HepG2 (cell line): ENCODE measurements at regions of chr3 and their contacts with region 1.

Region 1: DNA sequence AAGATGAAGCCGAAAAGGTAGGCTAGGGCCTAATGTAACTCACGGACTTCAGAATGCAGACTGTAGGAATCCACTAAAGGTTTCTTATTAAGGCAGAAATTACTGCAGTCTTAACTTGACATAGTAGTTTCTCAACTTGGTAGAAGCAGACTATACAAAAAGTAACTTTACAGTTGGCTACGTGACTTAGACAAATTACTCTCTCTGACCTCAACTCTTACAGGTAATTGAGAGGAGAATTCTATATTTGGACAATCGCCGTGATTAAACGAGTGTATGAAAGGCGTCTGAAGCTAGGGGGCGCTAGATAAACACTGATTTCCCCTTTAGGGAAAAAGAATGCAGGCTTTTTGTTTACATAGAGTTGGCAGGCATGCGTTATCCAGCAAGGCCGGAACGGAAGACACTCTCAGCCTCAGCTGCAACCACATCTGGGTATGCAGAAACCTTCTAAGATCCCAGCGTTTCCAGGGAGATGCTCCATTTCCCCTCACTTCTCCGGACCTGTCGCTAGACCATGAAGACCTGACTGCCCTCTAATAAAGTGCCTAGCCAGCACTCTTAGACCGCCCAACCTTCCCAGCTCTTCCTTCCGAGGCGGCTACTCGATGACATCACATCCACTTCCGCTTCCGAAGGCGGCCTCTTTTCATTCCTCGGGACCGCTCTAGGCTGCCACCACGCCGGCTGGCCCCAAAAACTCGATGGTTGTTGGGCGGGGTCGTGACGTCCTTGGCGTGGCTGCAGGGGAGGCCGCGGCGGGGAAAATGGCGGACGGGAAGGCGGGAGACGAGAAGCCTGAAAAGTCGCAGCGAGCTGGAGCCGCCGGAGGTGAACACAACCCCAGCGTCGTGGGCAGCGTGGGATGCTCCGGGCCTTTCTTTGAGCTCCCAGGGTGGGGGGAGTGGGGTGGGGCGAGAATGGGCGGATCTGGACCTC is at the start of gene PCNP:
- DNase-seq: peak; percentile 97
- ATAC-seq: peak; percentile 90
- H3K4me3 ChIP-seq: peak within 1 kb of the TSS; percentile 83 to 98 (median 97)
- H3K27ac ChIP-seq: peak within 1 kb of the TSS; percentile 89
- H3K4me1 ChIP-seq: peaks cover 57% of the 10 kb centered on the region
- H3K27me3 ChIP-seq: no peaks in the 10 kb centered on the region; a peak in 1 of 5 replicates
- CTCF ChIP-seq: peak; percentile 80
- EP300 ChIP-seq: no peak; a peak in 3 of 4 replicates
- POLR2A ChIP-seq: peak; percentile 90 to 92
- RAD21 ChIP-seq: peak; percentile 65
- total RNA-seq, gene PCNP: 78.2 and 112 TPM in 2 replicates

Region 2: GRCh38 chr3:101311676-101312075 is 262.0 kb before region 1 on chr3:
- CTCF ChIA-PET with region 1: no interaction called
- POLR2A ChIA-PET with region 1: no interaction called
- in situ Hi-C with region 1: no loop called
- intact Hi-C with region 1: no loop called
- DNase-seq: no peak
- ATAC-seq: no peak
- H3K4me3 ChIP-seq: no peak overlapping the region
- H3K27ac ChIP-seq: no peak overlapping the region
- H3K4me1 ChIP-seq: no peaks in the 10 kb centered on the region
- H3K27me3 ChIP-seq: no peaks in the 10 kb centered on the region
- CTCF ChIP-seq: no peak
- EP300 ChIP-seq: no peak
- POLR2A ChIP-seq: no peak
- RAD21 ChIP-seq: no peak

Region 3: GRCh38 chr3:101381809-101382208 is 191.9 kb before region 1 on chr3:
- CTCF ChIA-PET with region 1: no interaction called
- POLR2A ChIA-PET with region 1: no interaction called
- in situ Hi-C with region 1: no loop called
- intact Hi-C with region 1: loop called (anchors 10 kb)
- DNase-seq: peak; percentile 23
- ATAC-seq: no peak; the same call in 2 of the 3 replicates
- H3K4me3 ChIP-seq: no peak overlapping the region
- H3K27ac ChIP-seq: no peak overlapping the region
- H3K4me1 ChIP-seq: no peaks in the 10 kb centered on the region
- H3K27me3 ChIP-seq: no peaks in the 10 kb centered on the region; a peak in 1 of 5 replicates
- CTCF ChIP-seq: peak; percentile 36; the same call in 1 of the 2 replicates
- EP300 ChIP-seq: no peak
- POLR2A ChIP-seq: no peak
- RAD21 ChIP-seq: no peak

Region 4: GRCh38 chr3:101512646-101513418 is 60.9 kb before region 1 on chr3 and contains the start of gene SENP7:
- CTCF ChIA-PET with region 1: no interaction called
- POLR2A ChIA-PET with region 1: interaction called, 25 read pairs
- in situ Hi-C with region 1: loop called (anchors 5 kb)
- intact Hi-C with region 1: loop called (anchors 1 kb)
- DNase-seq: peak; percentile 71
- ATAC-seq: peak; percentile 85
- H3K4me3 ChIP-seq: peak within 1 kb of the TSS; percentile 80 to 92 (median 83)
- H3K27ac ChIP-seq: peak within 1 kb of the TSS; percentile 93
- H3K4me1 ChIP-seq: peaks cover 13% of the 10 kb centered on the region
- H3K27me3 ChIP-seq: no peaks in the 10 kb centered on the region; a peak in 1 of 5 replicates
- CTCF ChIP-seq: no peak
- EP300 ChIP-seq: no peak
- POLR2A ChIP-seq: peak; percentile 48 to 66
- RAD21 ChIP-seq: no peak
- total RNA-seq, gene SENP7: 10.0 and 10.3 TPM in 2 replicates

Region 5: GRCh38 chr3:101548527-101549105 is 25.1 kb before region 1 on chr3:
- CTCF ChIA-PET with region 1: no interaction called
- POLR2A ChIA-PET with region 1: interaction called, 23 read pairs
- in situ Hi-C with region 1: no loop called
- intact Hi-C with region 1: loop called (anchors 1 kb)
- DNase-seq: peak; percentile 87
- ATAC-seq: peak; percentile 87
- H3K4me3 ChIP-seq: no peak overlapping the region; a peak in 1 of 6 replicates
- H3K27ac ChIP-seq: peak overlapping the region; percentile 55
- H3K4me1 ChIP-seq: peaks cover 57% of the 10 kb centered on the region
- H3K27me3 ChIP-seq: no peaks in the 10 kb centered on the region
- CTCF ChIP-seq: no peak
- EP300 ChIP-seq: peak in 1 of 2 experiments; percentile 81; a peak in 2 of 4 replicates
- POLR2A ChIP-seq: no peak
- RAD21 ChIP-seq: no peak

Region 6: DNA sequence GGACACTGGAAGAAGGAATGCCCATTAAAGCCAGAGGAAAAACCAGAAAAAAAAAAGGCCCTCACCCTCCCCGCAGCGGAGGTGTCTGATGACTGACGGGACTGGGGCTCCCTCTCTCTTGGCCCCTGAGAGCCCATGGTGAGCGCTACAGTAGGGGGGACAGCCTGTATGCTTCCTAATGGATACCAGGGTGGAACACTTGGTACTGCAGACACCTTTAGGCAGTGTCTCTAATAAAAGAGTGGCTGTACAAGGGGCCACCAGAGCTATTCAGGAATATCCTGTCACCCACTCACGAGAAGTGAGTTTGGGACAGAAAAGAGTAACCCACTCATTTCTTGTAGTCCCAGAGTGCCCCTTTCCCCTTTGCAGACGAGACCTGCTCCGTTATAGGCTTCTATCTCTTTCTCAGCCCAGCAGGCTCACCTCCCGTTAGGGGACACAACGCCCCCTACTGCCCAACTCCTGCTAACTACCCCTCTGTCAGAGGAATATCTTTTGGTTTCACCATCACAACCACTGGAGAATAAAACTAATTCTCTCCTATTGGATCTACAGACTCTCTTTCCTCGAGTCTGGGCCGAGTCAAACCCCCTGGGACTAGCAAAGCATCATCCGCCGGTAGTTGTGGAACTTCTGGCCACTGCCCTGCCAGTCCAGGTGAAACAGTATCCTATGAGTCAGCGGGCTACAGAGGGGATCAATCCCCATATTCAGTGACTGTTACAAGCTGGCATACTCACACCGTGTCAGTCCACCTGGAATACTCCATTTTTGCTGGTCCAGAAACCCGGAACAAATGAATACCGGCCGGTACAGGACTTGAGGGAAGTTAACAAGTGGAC is 62.5 kb after region 1 on chr3:
- CTCF ChIA-PET with region 1: no interaction called
- POLR2A ChIA-PET with region 1: interaction called, 4 read pairs
- in situ Hi-C with region 1: loop called (anchors 5 kb)
- intact Hi-C with region 1: loop called (anchors 1 kb)
- DNase-seq: peak; percentile 44
- ATAC-seq: peak; percentile 88
- H3K4me3 ChIP-seq: peak overlapping the region; percentile 27 to 49 (median 40)
- H3K27ac ChIP-seq: no peak overlapping the region
- H3K4me1 ChIP-seq: peaks cover 37% of the 10 kb centered on the region
- H3K27me3 ChIP-seq: peaks cover 0 to 27% of the 10 kb centered on the region in 2 experiments; a peak in 3 of 5 replicates
- CTCF ChIP-seq: peak; percentile 87
- EP300 ChIP-seq: no peak
- POLR2A ChIP-seq: no peak
- RAD21 ChIP-seq: peak; percentile 73; the same call in 1 of the 2 replicates

Region 7: GRCh38 chr3:101685870-101686412 is 112.2 kb after region 1 on chr3:
- CTCF ChIA-PET with region 1: no interaction called
- POLR2A ChIA-PET with region 1: interaction called, 8 read pairs
- in situ Hi-C with region 1: no loop called
- intact Hi-C with region 1: loop called (anchors 2 kb)
- DNase-seq: peak; percentile 11
- ATAC-seq: peak; percentile 16
- H3K4me3 ChIP-seq: peak overlapping the region; percentile 79 to 91 (median 91)
- H3K27ac ChIP-seq: peak overlapping the region; percentile 85
- H3K4me1 ChIP-seq: peaks cover 50% of the 10 kb centered on the region
- H3K27me3 ChIP-seq: peaks cover 0 to 4% of the 10 kb centered on the region in 2 experiments; a peak in 1 of 5 replicates
- CTCF ChIP-seq: no peak
- EP300 ChIP-seq: no peak
- POLR2A ChIP-seq: no peak
- RAD21 ChIP-seq: no peak